Ovary (tissue), 10 donors: ENCODE measurements at regions of chr3 and their contacts with region 1.

Region 1: DNA sequence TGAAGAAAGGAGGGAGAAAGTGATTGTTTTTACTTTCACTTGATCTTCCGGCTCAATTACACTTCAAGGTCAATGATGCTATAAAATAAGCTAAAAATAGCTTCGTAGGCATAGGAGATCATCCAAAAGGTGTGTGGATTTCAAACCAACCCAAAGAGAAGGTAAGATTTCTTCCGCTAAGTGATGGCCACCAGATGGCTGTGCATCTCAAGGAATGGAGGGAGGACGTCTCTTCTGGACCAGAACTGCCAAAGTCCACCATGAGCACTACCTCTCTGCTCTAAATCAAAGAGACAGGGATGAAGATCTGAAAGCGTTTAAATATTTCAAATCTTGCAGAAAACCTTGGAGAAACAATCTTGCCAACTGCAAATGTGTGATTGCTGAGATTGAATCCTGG is 199.1 kb upstream of the ZPLD1 start:
- DNase-seq: no peak
- H3K4me3 ChIP-seq: no peak overlapping the region
- H3K27ac ChIP-seq: no peak overlapping the region
- H3K4me1 ChIP-seq: no peaks in the 10 kb centered on the region
- H3K27me3 ChIP-seq: no peaks in the 10 kb centered on the region
- CTCF ChIP-seq: no peak
- EP300 ChIP-seq: no peak
- POLR2A ChIP-seq: no peak

Region 2: DNA sequence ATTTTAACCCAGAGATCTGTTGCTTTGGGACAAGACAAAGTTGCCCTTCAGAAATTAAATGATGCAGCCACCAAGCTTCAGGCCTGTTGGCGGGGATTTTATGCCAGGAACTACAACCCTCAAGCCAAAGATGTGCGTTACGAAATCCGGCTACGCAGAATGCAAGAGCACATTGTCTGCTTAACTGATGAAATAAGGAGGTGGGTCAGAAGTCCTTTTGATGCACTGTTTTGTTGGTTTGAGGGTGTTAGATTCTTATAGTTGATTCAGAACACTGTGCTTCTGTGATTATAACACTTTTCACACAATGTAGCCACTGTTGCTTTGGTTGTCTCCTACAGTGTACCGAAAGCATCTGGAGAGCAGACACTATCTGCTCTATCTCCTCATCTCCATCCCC is 477.5 kb before region 1 on chr3:
- intact Hi-C with region 1: no loop called
- DNase-seq: no peak
- H3K4me3 ChIP-seq: no peak overlapping the region
- H3K27ac ChIP-seq: no peak overlapping the region
- H3K4me1 ChIP-seq: no peaks in the 10 kb centered on the region
- H3K27me3 ChIP-seq: no peaks in the 10 kb centered on the region
- CTCF ChIP-seq: no peak
- EP300 ChIP-seq: no peak
- POLR2A ChIP-seq: no peak

Region 3: DNA sequence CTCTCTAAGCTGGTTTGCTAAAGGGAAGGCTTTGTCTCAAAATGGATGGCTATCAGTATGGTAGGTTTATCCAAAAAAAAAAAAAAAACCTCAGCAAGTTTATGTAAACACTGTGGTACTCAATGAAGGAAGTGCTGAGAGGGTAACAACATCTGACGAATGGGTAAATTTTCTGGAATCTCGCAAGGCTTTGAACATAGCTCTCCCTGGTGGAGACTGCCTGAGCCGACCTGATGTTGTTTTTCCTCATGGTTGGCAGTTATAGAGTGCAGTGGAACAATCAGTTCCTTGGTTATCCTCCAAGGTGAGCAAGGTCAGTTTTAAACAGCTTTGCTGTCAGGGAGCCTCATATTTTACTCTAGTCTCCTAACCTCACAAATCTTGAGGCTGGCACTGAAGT is 293.8 kb after region 1 on chr3:
- intact Hi-C with region 1: loop called in 2 of 4 experiments (anchors 5 to 10 kb)
- DNase-seq: peak in 2 of 5 donors; percentile 14 to 51
- H3K4me3 ChIP-seq: no peak overlapping the region
- H3K27ac ChIP-seq: no peak overlapping the region
- H3K4me1 ChIP-seq: no peaks in the 10 kb centered on the region
- H3K27me3 ChIP-seq: no peaks in the 10 kb centered on the region
- CTCF ChIP-seq: no peak
- EP300 ChIP-seq: no peak
- POLR2A ChIP-seq: no peak